Activated CD8-positive, alpha-beta memory T cell treated with anti-CD3 and anti-CD28 coated beads, Interleukin-2, amount 10 ng/mL, durations not matched to agents 7 days and 5 days (primary cell): ENCODE measurements at regions of chr2 and their contacts with region 1.

Region 1: DNA sequence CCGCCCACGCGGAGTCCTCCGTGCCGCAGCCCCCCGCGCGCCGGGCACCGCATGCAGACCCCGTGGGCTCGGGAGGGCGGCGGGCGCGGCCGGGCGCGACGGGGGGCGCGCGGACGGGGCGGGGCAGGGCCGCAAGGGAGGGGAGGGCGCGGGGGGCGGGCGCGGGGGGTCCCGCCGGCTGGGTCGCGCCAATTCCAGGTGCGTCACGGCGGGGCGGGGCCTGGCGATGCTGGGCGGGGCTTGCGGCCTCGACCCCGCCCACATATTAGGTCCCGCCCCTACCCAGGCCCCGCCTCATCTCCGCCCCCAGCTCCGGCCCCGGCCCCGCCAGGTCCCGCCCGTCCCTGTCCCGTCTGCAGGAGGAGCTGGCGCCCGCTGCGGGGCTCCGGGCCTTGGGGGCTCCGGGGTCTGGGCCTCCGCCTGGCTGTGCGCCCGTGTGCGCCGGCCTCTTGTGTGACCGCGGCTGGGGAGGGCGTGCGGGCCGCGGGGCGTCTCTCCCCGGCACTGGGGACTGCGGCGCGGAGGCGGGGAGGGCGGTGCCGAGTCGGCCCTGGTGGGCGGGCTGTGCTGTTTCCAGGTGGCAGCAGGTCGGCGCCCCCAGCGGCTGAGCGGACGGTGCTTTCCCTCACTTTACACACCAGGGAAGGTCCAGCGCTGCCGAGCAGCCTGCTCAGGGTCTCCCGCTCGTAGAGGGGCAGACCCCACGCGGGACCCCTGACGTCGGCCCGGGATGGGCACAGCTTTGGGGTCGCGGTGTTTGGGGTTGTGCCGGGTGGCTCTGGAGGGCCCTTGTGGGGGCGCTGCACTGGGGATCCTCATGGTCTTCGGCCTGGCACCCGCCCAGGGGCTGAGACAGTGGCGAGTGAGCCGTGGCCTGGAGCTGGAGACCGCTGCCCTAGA is 543 bp downstream of the ING5 start:
- DNase-seq: peak; percentile 92
- ATAC-seq: peak; percentile 77
- H3K4me3 Mint-ChIP-seq: peak overlapping the region; percentile 77
- H3K27ac Mint-ChIP-seq: peak overlapping the region; percentile 69
- H3K4me1 Mint-ChIP-seq: peaks cover 22% of the 10 kb centered on the region
- H3K27me3 Mint-ChIP-seq: no peaks in the 10 kb centered on the region

Region 2: DNA sequence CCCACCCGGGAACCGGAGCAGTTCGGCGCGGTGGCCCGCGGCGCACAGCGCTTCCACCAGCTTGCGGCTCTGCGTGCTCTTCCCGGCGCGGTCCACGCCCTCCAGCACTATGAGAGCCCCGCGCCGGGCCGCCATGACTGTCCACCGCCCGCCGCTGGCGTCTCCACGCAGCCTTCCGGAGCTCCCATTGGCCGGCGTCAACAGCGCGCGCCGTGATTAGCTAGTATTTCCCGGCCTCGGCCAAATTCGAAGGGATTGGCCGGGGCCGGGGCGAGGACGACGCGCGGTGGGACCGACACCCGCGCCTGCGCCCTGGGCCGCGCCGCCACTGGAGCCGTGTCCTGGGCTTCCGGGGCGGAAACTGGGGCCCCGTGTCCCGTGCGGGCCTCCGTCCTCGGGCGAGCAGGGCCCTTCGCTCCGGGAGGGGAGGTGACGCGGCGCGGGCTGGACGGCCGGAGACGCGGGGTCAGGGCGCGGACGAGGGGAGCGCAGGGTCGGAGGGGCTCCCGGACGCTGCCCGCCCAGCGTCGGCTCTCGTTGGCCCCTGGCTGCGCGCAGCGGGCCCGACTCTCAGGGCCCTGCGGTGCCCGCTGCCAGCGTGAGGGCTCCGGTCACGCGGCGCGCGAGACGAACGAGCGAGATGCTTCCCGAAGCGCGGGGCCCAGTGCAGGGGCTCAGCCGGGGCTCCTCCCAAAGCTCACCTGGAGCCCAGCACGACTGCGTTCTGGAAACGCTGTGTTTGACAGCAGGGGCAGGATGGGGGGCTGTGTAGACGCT is 15.5 kb before region 1 on chr2 and contains the start of gene DTYMK:
- CTCF ChIA-PET with region 1: interaction called, 78 read pairs
- DNase-seq: peak; percentile 97
- ATAC-seq: peak; percentile 98
- H3K4me3 Mint-ChIP-seq: peak within 1 kb of the TSS; percentile 94
- H3K27ac Mint-ChIP-seq: peak within 1 kb of the TSS; percentile 96
- H3K4me1 Mint-ChIP-seq: peaks cover 36% of the 10 kb centered on the region
- H3K27me3 Mint-ChIP-seq: no peaks in the 10 kb centered on the region
- total RNA-seq, gene DTYMK: 79.9 to 95.5 TPM

Region 3: GRCh38 chr2:241720560-241720959 is 18.2 kb after region 1 on chr2:
- CTCF ChIA-PET with region 1: interaction called, 12 read pairs
- DNase-seq: no peak
- ATAC-seq: no peak
- H3K4me3 Mint-ChIP-seq: no peak overlapping the region
- H3K27ac Mint-ChIP-seq: no peak overlapping the region
- H3K4me1 Mint-ChIP-seq: no peaks in the 10 kb centered on the region
- H3K27me3 Mint-ChIP-seq: no peaks in the 10 kb centered on the region

Region 4: GRCh38 chr2:241734467-241735208 is 32.3 kb after region 1 on chr2 and contains the start of gene D2HGDH:
- CTCF ChIA-PET with region 1: interaction called, 45 read pairs
- DNase-seq: peak; percentile 95
- ATAC-seq: peak; percentile 94
- H3K4me3 Mint-ChIP-seq: peak within 1 kb of the TSS; percentile 80
- H3K27ac Mint-ChIP-seq: peak within 1 kb of the TSS; percentile 56
- H3K4me1 Mint-ChIP-seq: peaks cover 50% of the 10 kb centered on the region
- H3K27me3 Mint-ChIP-seq: no peaks in the 10 kb centered on the region
- total RNA-seq, gene D2HGDH: 21.6 to 26.2 TPM

Region 5: GRCh38 chr2:241877989-241878970 is 175.9 kb after region 1 on chr2:
- CTCF ChIA-PET with region 1: interaction called, 17 read pairs
- DNase-seq: peak; percentile 83
- ATAC-seq: peak; percentile 26
- H3K4me3 Mint-ChIP-seq: no peak overlapping the region
- H3K27ac Mint-ChIP-seq: no peak overlapping the region
- H3K4me1 Mint-ChIP-seq: peaks cover 28% of the 10 kb centered on the region
- H3K27me3 Mint-ChIP-seq: no peaks in the 10 kb centered on the region

Region 6: GRCh38 chr2:241902357-241902991 is 200.1 kb after region 1 on chr2:
- CTCF ChIA-PET with region 1: no interaction called
- DNase-seq: no peak
- ATAC-seq: no peak
- H3K4me3 Mint-ChIP-seq: no peak overlapping the region
- H3K27ac Mint-ChIP-seq: no peak overlapping the region
- H3K4me1 Mint-ChIP-seq: no peaks in the 10 kb centered on the region
- H3K27me3 Mint-ChIP-seq: no peaks in the 10 kb centered on the region